ENCODE measurements at regions of chr14 and their contacts with region 1.

Region 1: DNA sequence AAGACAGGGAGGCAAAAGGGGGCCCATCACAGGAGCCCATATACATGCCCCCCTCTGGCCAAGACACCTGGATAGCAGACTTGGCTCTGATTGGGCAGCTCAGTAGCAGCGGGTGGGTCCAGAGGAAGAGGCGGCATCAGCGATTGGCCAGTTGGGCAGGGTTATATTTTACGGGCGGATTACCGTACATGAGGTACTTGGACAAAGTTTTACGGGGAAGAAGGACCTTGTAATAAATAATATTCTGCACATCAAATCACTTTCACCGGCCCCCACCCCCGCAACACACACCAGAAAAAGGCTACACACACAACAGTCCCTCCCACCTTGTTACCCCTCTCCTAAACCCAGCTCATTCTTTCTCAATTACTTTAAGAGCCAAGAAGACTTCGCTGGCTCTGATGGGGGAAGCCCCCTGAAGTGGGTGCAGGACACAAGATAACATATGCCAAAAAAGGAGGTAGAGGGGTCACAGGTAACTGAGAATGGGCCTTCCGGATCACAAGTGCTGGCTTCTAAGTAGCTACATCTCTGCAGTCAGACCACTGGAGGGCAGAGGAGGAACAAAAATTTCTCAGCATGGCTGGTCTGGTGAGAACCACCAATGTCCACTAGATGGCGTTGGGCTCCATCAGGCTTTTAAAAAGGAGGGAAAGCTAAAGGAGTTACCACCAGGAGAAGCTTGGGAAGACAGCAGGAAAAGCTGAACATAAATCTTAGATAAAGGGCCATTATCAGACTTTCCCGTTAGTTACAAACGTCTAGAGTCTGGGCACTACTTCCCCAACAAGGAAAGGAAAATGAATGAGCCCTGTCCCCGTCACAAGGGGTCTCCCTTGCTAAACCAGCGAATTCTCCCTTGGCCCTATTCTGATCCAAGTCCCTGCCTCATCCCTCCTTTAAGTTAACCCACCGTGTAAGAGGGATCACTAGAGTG is 11.4 kb upstream of the CDH24 start:
- DNase-seq: peak; percentile 67
- ATAC-seq: peak; percentile 91
- H3K4me3 ChIP-seq: no peak overlapping the region
- H3K27ac ChIP-seq: no peak overlapping the region
- H3K4me1 ChIP-seq: peaks cover 11% of the 10 kb centered on the region; the same call in 1 of the 2 replicates
- H3K27me3 ChIP-seq: no peaks in the 10 kb centered on the region
- CTCF ChIP-seq: peak; percentile 97 to 100 (median 99)
- EP300 ChIP-seq: no peak
- POLR2A ChIP-seq: no peak
- RAD21 ChIP-seq: peak; percentile 62

Region 2: GRCh38 chr14:22973217-22974032 is 95.3 kb before region 1 on chr14:
- CTCF ChIA-PET with region 1: interaction called, 120 read pairs
- POLR2A ChIA-PET with region 1: no interaction called
- RAD21 ChIA-PET with region 1: interaction called, 5 read pairs
- SMC1A ChIA-PET with region 1: interaction called, 12 read pairs
- in situ Hi-C with region 1: no loop called
- intact Hi-C with region 1: no loop called
- DNase-seq: no peak
- ATAC-seq: peak; percentile 85
- H3K4me3 ChIP-seq: no peak overlapping the region
- H3K27ac ChIP-seq: no peak overlapping the region
- H3K4me1 ChIP-seq: no peaks in the 10 kb centered on the region
- H3K27me3 ChIP-seq: no peaks in the 10 kb centered on the region
- CTCF ChIP-seq: peak; percentile 65 to 82 (median 70)
- EP300 ChIP-seq: no peak
- POLR2A ChIP-seq: no peak
- RAD21 ChIP-seq: peak; percentile 61

Region 3: GRCh38 chr14:23000860-23001259 is 67.9 kb before region 1 on chr14:
- CTCF ChIA-PET with region 1: interaction called, 37 read pairs
- POLR2A ChIA-PET with region 1: interaction called, 6 read pairs
- RAD21 ChIA-PET with region 1: interaction called, 16 read pairs
- SMC1A ChIA-PET with region 1: interaction called, 14 read pairs
- in situ Hi-C with region 1: no loop called
- intact Hi-C with region 1: no loop called
- DNase-seq: no peak
- ATAC-seq: no peak
- H3K4me3 ChIP-seq: no peak overlapping the region
- H3K27ac ChIP-seq: no peak overlapping the region
- H3K4me1 ChIP-seq: peaks cover 4% of the 10 kb centered on the region; the same call in 1 of the 2 replicates
- H3K27me3 ChIP-seq: no peaks in the 10 kb centered on the region
- CTCF ChIP-seq: no peak
- EP300 ChIP-seq: no peak
- POLR2A ChIP-seq: no peak
- RAD21 ChIP-seq: no peak

Region 4: GRCh38 chr14:23034483-23035302 is 34.1 kb before region 1 on chr14 and contains the start of gene PSMB5:
- CTCF ChIA-PET with region 1: interaction called, 16 read pairs
- POLR2A ChIA-PET with region 1: no interaction called
- RAD21 ChIA-PET with region 1: interaction called, 3 read pairs
- SMC1A ChIA-PET with region 1: interaction called, 4 read pairs
- in situ Hi-C with region 1: no loop called
- intact Hi-C with region 1: no loop called
- DNase-seq: peak; percentile 98
- ATAC-seq: peak; percentile 98
- H3K4me3 ChIP-seq: peak within 1 kb of the TSS; percentile 83
- H3K27ac ChIP-seq: peak within 1 kb of the TSS; percentile 92
- H3K4me1 ChIP-seq: peaks cover 6% of the 10 kb centered on the region
- H3K27me3 ChIP-seq: no peaks in the 10 kb centered on the region
- CTCF ChIP-seq: no peak
- EP300 ChIP-seq: no peak
- POLR2A ChIP-seq: peak; percentile 91
- RAD21 ChIP-seq: no peak
- polyA plus RNA-seq, gene PSMB5: 686 to 802 TPM

Region 5: GRCh38 chr14:23095196-23096108 is 26.7 kb after region 1 on chr14 and contains the start of gene C14orf119:
- CTCF ChIA-PET with region 1: interaction called, 65 read pairs
- POLR2A ChIA-PET with region 1: interaction called, 19 read pairs
- RAD21 ChIA-PET with region 1: interaction called, 23 read pairs
- SMC1A ChIA-PET with region 1: interaction called, 13 read pairs
- in situ Hi-C with region 1: no loop called
- intact Hi-C with region 1: no loop called
- DNase-seq: peak; percentile 99
- ATAC-seq: peak; percentile 93
- H3K4me3 ChIP-seq: peak within 1 kb of the TSS; percentile 92
- H3K27ac ChIP-seq: peak within 1 kb of the TSS; percentile 99
- H3K4me1 ChIP-seq: peaks cover 3% of the 10 kb centered on the region; the same call in 1 of the 2 replicates
- H3K27me3 ChIP-seq: no peaks in the 10 kb centered on the region
- CTCF ChIP-seq: no peak
- EP300 ChIP-seq: no peak
- POLR2A ChIP-seq: peak; percentile 61; the same call in 1 of the 2 replicates
- RAD21 ChIP-seq: no peak
- polyA plus RNA-seq, gene C14orf119: 166 to 228 TPM

Region 6: DNA sequence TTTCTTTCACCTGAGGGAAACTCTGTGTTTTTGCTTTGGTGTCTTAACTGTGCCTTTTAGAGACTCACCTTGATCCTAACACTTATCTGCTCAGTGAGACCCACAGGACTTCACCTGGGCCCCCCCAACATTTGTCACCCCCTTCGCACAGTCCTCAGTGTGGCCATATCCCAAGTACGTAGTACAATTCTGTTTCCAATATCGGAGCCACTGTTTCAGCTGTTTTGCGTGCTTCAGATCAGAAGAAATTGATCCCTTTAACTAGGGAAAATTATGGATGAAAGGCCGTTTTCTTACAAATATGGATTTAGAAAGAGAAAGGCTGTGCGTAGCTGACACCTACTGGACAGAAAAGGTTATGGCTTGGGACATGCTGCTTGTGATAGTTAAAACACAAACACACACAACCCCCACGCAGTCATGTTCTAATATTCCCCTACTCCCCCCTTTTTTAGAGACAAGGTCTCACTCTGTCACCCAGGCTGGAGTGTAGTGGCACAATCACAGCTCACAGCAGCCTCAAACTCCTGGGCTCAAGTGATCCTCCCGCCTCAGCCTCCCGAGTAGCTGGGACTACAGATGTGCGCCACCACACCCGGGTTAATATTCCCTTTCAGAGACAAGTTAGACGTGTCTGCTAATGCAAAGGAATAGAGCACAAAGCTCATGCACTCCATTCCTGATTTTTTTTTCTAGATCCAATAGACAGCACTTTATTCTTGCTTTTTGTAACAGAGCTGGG is 118.3 kb after region 1 on chr14:
- CTCF ChIA-PET with region 1: interaction called, 7 read pairs
- POLR2A ChIA-PET with region 1: no interaction called
- RAD21 ChIA-PET with region 1: interaction called, 3 read pairs
- SMC1A ChIA-PET with region 1: interaction called, 3 read pairs
- in situ Hi-C with region 1: no loop called
- intact Hi-C with region 1: loop called (anchors 2 kb)
- DNase-seq: peak; percentile 5
- ATAC-seq: peak; percentile 73
- H3K4me3 ChIP-seq: no peak overlapping the region
- H3K27ac ChIP-seq: no peak overlapping the region
- H3K4me1 ChIP-seq: peaks cover 7% of the 10 kb centered on the region; the same call in 1 of the 2 replicates
- H3K27me3 ChIP-seq: peaks cover 1 to 5% of the 10 kb centered on the region in 2 experiments; a peak in 3 of 4 replicates
- CTCF ChIP-seq: peak; percentile 58 to 67 (median 66)
- EP300 ChIP-seq: no peak
- POLR2A ChIP-seq: no peak
- RAD21 ChIP-seq: peak; percentile 71